CD14-positive monocyte (primary cell): ENCODE measurements at regions of chr22 and their contacts with region 1.

Region 1: GRCh38 chr22:38973289-38974169 is 8.6 kb upstream of the APOBEC3B start:
- DNase-seq: peak; percentile 48 to 60 (median 56)
- H3K4me3 ChIP-seq: no peak overlapping the region
- H3K4me3 Mint-ChIP-seq: no peak overlapping the region
- H3K27ac ChIP-seq: no peak overlapping the region
- H3K27ac Mint-ChIP-seq: peak overlapping the region in 5 of 7 donors; percentile 21 to 81 (median 69)
- H3K4me1 ChIP-seq: peaks cover 53 to 62% of the 10 kb centered on the region in 2 donors
- H3K4me1 Mint-ChIP-seq: peaks cover 56% of the 10 kb centered on the region
- H3K27me3 ChIP-seq: no peaks in the 10 kb centered on the region
- H3K27me3 Mint-ChIP-seq: peaks cover 6 to 12% (median 6%) of the 10 kb centered on the region in 3 donors
- CTCF ChIP-seq: peak; percentile 95

Region 2: GRCh38 chr22:38935023-38935422 is 38.5 kb before region 1 on chr22:
- intact Hi-C with region 1: loop called in 1 of 2 experiments (anchors 5 kb)
- DNase-seq: no peak
- H3K4me3 ChIP-seq: no peak overlapping the region
- H3K4me3 Mint-ChIP-seq: peak overlapping the region in 1 of 2 donors; percentile 51
- H3K27ac ChIP-seq: no peak overlapping the region
- H3K27ac Mint-ChIP-seq: no peak overlapping the region
- H3K4me1 ChIP-seq: peaks cover 8 to 12% of the 10 kb centered on the region in 2 donors
- H3K4me1 Mint-ChIP-seq: peaks cover 12% of the 10 kb centered on the region
- H3K27me3 ChIP-seq: peaks cover 0 to 15% of the 10 kb centered on the region in 2 donors
- H3K27me3 Mint-ChIP-seq: peaks cover 19 to 52% (median 42%) of the 10 kb centered on the region in 3 donors
- CTCF ChIP-seq: no peak

Region 3: GRCh38 chr22:39283322-39284004 is 309.9 kb after region 1 on chr22:
- intact Hi-C with region 1: no loop called
- DNase-seq: peak in 1 of 3 donors; percentile 37
- H3K4me3 ChIP-seq: no peak overlapping the region
- H3K4me3 Mint-ChIP-seq: no peak overlapping the region
- H3K27ac ChIP-seq: peak overlapping the region in 1 of 2 donors; percentile 72
- H3K27ac Mint-ChIP-seq: peak overlapping the region in 3 of 7 donors; percentile 86 to 90 (median 88)
- H3K4me1 ChIP-seq: peaks cover 54 to 60% of the 10 kb centered on the region in 2 donors
- H3K4me1 Mint-ChIP-seq: peaks cover 61% of the 10 kb centered on the region
- H3K27me3 ChIP-seq: peaks cover 3 to 22% of the 10 kb centered on the region in 2 donors
- H3K27me3 Mint-ChIP-seq: peaks cover 24 to 40% (median 33%) of the 10 kb centered on the region in 3 donors
- CTCF ChIP-seq: no peak